Activated T-helper 1 cell treated with anti-CD3 and anti-CD28 coated beads, Interleukin-12 subunit alpha, Interleukin-12 subunit beta, Interleukin-2, Interleukin-4 antibody, amounts not matched to agents 30 ng/mL and 10 ng/mL and 1 ng/mL, durations not matched to agents 14 hours and 24 hours and 36 hours (primary cell): ENCODE measurements at regions of chr6 and their contacts with region 1.

Region 1: DNA sequence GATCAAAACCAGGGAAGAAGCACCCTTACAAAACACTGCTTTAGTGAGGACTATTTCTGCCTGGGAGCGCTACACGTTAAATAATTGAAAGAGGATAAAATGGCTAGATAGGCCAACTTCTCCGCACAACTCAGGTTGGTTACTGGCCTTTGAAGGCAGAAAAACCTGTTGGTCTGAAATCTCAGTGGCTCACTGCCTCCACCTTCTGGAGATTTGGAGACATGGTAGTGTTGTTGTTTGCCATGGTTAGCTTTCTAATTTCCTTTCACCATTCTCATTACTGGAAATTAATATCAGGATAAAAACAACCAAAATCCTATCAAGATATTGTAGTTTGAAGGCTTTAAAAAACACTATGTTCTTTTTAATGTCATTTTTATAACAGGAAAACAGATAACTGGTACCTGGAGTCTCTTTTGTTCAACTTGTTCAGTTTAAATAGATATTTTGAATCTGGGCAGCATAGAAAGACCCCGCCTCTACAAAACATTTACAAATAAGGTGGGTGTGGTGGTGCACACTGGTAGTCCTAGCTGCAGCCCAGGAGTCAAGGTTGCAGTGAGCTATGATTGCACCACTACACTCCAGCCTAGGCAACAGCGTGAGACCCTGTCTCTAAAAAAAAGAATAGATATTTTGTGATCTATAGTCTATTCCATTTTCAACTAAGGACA is 27.5 kb upstream of the BCLAF1 start:
- DNase-seq: peak; percentile 41
- H3K4me3 Mint-ChIP-seq: no peak overlapping the region
- H3K27ac Mint-ChIP-seq: no peak overlapping the region
- H3K4me1 Mint-ChIP-seq: no peaks in the 10 kb centered on the region
- H3K27me3 Mint-ChIP-seq: peaks cover 9% of the 10 kb centered on the region

Region 2: GRCh38 chr6:135451693-135452092 is 865.5 kb before region 1 on chr6:
- intact Hi-C with region 1: loop called (anchors 1 kb)
- DNase-seq: no peak
- H3K4me3 Mint-ChIP-seq: no peak overlapping the region
- H3K27ac Mint-ChIP-seq: no peak overlapping the region
- H3K4me1 Mint-ChIP-seq: peaks cover 5% of the 10 kb centered on the region
- H3K27me3 Mint-ChIP-seq: no peaks in the 10 kb centered on the region

Region 3: DNA sequence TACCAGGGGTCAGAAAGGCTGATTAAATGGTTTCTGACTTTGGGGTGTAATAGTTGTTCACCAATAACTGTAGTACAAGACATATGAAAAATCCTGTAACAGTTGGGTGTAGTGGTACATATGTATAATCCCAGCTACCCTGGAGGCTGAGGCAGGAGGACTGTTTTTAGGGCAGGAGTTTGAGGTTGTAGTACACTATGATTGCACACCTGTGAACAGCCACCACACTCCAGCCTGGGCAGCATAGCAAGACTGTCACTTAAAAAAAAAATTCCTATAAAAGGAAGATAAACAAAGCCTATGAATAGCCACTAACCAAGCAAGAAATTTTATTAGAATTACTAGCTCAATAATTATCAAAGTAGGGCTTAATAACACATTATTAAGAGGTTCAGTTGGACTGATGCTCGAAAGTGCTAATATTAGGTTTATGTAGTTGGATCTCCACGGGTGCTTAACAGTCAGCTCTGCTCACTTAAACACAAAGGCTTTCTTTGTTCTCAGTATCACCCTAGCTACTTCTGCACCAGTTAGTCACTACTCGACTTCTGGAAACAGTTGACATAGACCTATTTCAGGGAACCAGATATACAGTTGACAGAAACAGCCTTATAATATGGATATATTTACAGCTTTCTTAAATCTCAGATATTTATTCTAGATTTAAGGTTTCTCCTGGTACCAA is 180.0 kb before region 1 on chr6:
- intact Hi-C with region 1: no loop called
- DNase-seq: no peak
- H3K4me3 Mint-ChIP-seq: no peak overlapping the region
- H3K27ac Mint-ChIP-seq: no peak overlapping the region
- H3K4me1 Mint-ChIP-seq: no peaks in the 10 kb centered on the region
- H3K27me3 Mint-ChIP-seq: no peaks in the 10 kb centered on the region